ENCODE measurements at regions of chrX and their contacts with region 1.

Region 1: DNA sequence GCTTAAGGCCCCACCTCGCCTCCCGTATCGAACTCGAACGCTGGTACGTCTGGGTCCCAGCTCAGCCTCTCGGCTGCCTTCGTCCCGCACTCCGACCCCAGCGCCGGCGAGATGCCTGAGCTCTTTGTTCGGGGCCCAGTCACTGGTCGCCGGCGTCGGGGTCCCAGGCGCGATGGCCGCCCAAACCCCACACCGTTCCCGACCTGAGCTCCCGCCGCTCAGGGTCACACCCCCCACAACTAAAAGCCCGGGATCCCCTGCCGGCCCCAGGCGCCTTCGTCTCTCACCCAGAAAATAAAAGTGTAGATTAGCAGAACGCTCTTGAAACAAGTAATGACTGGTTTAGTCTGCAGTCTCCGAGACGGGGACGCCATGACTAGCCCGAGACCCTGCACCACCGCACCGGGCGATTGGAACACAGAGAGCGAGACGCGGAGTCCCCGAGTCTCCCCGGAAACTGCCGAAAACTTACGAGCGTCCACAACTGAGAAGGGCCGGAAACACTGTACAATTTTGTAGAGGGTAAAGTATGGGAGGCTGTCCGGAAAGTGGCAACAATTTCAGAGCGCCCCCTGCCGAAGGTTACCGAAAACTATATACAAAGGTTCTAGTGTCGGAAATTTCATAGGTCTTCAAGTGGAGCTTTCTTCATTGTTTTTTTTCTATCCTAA is at the start of gene TSPAN6:
- DNase-seq: peak; percentile 45
- H3K4me3 Mint-ChIP-seq: peak within 1 kb of the TSS; percentile 90
- H3K27ac Mint-ChIP-seq: no peak within 1 kb of the TSS
- H3K4me1 Mint-ChIP-seq: peaks cover 9% of the 10 kb centered on the region
- H3K27me3 Mint-ChIP-seq: peaks cover 13% of the 10 kb centered on the region
- total RNA-seq, gene TSPAN6: not detected in 2 replicates

Region 2: GRCh38 chrX:100512471-100512870 is 124.0 kb before region 1 on chrX:
- intact Hi-C with region 1: loop called (anchors 1 kb)
- DNase-seq: no peak
- H3K4me3 Mint-ChIP-seq: no peak overlapping the region
- H3K27ac Mint-ChIP-seq: no peak overlapping the region
- H3K4me1 Mint-ChIP-seq: no peaks in the 10 kb centered on the region
- H3K27me3 Mint-ChIP-seq: peaks cover 2% of the 10 kb centered on the region